ENCODE measurements at regions of chr12 and their contacts with region 1.

Region 1: DNA sequence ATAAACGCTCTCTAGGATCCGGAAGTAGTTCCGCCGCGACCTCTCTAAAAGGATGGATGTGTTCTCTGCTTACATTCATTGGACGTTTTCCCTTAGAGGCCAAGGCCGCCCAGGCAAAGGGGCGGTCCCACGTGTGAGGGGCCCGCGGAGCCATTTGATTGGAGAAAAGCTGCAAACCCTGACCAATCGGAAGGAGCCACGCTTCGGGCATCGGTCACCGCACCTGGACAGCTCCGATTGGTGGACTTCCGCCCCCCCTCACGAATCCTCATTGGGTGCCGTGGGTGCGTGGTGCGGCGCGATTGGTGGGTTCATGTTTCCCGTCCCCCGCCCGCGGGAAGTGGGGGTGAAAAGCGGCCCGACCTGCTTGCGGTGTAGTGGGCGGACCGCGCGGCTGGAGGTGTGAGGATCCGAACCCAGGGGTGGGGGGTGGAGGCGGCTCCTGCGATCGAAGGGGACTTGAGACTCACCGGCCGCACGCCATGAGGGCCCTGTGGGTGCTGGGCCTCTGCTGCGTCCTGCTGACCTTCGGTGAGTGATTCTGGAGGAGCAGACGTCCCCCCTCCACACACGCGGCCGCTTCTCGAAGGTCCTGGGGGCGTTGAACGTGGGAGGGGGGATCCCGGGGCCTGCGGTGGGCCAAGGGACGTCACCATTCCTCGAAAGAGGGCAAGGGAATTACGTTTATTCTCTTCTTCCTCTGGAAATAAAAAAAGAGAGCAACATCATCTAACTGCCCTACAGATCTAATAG is at the start of gene HSP90B1:
- DNase-seq: peak; percentile 100
- ATAC-seq: peak; percentile 63
- H3K4me3 Mint-ChIP-seq: peak within 1 kb of the TSS; percentile 87
- H3K27ac Mint-ChIP-seq: peak within 1 kb of the TSS; percentile 99
- H3K4me1 Mint-ChIP-seq: peaks cover 49% of the 10 kb centered on the region
- H3K27me3 Mint-ChIP-seq: peaks cover 3% of the 10 kb centered on the region
- CTCF ChIP-seq: no peak
- total RNA-seq, gene HSP90B1: 412 to 418 TPM

Region 2: GRCh38 chr12:103771466-103771865 is 158.7 kb before region 1 on chr12:
- CTCF ChIA-PET with region 1: no interaction called
- POLR2A ChIA-PET with region 1: no interaction called
- intact Hi-C with region 1: no loop called
- DNase-seq: peak; percentile 6
- ATAC-seq: no peak
- H3K4me3 Mint-ChIP-seq: no peak overlapping the region
- H3K27ac Mint-ChIP-seq: no peak overlapping the region
- H3K4me1 Mint-ChIP-seq: no peaks in the 10 kb centered on the region
- H3K27me3 Mint-ChIP-seq: no peaks in the 10 kb centered on the region
- CTCF ChIP-seq: no peak

Region 3: DNA sequence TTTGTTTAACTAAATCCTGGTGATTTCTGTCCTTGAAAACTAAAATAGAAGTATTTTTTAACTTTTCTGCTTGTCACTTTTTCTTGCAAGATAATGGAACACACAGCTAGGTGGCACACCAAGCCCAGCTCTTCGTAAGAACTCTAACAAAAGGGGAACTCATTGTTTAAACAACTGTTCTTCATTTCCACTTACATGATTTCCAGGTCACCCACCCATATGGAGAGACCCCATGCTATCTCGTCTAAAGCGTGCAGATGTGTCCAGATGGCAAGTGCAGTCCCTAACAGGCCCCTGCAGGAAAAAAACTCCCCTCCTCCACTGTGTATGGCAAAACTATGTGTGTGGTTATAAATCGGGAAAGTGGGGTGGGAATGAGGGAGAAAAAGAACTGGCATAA is 45.9 kb before region 1 on chr12:
- CTCF ChIA-PET with region 1: interaction called, 16 read pairs
- POLR2A ChIA-PET with region 1: interaction called, 18 read pairs
- intact Hi-C with region 1: loop called (anchors 5 kb)
- DNase-seq: peak; percentile 74
- ATAC-seq: peak; percentile 17
- H3K4me3 Mint-ChIP-seq: no peak overlapping the region
- H3K27ac Mint-ChIP-seq: no peak overlapping the region
- H3K4me1 Mint-ChIP-seq: peaks cover 42% of the 10 kb centered on the region
- H3K27me3 Mint-ChIP-seq: no peaks in the 10 kb centered on the region
- CTCF ChIP-seq: peak; percentile 72

Region 4: DNA sequence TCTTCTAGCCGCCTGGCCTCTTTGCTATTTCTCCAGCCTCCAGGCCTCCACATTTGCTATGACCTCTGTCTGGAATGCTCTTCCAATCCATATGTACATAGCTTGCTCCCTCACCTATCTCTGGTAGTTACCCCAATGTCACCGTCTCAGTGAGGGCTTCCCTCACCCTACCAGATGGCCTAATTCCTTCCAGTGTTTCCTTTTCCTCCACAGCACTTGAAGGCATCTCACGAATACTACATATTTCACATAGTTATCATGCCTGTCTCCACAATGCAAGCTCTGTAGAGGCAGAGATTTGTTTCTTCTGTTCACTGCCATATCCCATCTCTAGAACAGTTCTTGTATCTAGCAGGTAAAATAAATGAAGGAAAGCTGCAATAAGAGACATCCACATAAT is 21.3 kb before region 1 on chr12:
- CTCF ChIA-PET with region 1: interaction called, 14 read pairs
- POLR2A ChIA-PET with region 1: interaction called, 90 read pairs
- intact Hi-C with region 1: loop called (anchors 2 kb)
- DNase-seq: no peak
- ATAC-seq: no peak
- H3K4me3 Mint-ChIP-seq: no peak overlapping the region
- H3K27ac Mint-ChIP-seq: no peak overlapping the region
- H3K4me1 Mint-ChIP-seq: peaks cover 49% of the 10 kb centered on the region
- H3K27me3 Mint-ChIP-seq: no peaks in the 10 kb centered on the region
- CTCF ChIP-seq: no peak

Region 5: DNA sequence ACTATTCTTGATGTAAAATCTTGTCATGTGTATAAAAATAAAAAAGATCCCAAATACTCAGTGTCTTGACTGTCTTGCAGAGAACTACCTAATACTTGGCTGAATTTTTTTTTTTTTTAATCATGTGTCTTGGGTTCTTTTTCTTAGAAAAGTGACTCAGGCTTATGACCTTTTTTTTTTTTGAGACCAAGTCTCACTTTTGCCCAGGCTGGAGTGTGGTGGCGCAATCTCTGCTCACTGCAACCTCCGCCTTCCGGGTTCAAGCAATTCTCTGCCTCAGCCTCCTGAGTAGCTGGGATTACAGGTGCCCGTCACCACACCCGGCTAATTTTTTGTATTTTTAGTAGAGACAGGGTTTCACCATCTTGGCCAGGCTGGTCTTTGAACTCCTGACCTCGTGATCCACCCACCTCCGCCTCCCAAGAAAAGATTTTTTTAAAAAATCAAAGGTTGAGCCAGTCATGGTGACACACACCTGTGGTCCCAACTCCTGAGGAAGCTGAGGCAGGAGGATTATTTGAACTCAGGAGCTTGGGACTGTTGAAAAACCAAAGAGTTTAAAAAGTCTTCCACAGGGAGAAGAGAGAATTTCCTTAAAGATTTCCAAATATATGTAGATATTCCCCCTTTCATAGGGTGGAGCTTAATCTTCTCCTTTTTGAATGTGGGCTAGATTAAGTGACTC is 17.8 kb after region 1 on chr12:
- CTCF ChIA-PET with region 1: interaction called, 5 read pairs
- POLR2A ChIA-PET with region 1: interaction called, 56 read pairs
- intact Hi-C with region 1: no loop called
- DNase-seq: peak; percentile 48
- ATAC-seq: peak; percentile 37
- H3K4me3 Mint-ChIP-seq: no peak overlapping the region
- H3K27ac Mint-ChIP-seq: peak overlapping the region; percentile 71
- H3K4me1 Mint-ChIP-seq: peaks cover 60% of the 10 kb centered on the region
- H3K27me3 Mint-ChIP-seq: no peaks in the 10 kb centered on the region
- CTCF ChIP-seq: no peak

Region 6: DNA sequence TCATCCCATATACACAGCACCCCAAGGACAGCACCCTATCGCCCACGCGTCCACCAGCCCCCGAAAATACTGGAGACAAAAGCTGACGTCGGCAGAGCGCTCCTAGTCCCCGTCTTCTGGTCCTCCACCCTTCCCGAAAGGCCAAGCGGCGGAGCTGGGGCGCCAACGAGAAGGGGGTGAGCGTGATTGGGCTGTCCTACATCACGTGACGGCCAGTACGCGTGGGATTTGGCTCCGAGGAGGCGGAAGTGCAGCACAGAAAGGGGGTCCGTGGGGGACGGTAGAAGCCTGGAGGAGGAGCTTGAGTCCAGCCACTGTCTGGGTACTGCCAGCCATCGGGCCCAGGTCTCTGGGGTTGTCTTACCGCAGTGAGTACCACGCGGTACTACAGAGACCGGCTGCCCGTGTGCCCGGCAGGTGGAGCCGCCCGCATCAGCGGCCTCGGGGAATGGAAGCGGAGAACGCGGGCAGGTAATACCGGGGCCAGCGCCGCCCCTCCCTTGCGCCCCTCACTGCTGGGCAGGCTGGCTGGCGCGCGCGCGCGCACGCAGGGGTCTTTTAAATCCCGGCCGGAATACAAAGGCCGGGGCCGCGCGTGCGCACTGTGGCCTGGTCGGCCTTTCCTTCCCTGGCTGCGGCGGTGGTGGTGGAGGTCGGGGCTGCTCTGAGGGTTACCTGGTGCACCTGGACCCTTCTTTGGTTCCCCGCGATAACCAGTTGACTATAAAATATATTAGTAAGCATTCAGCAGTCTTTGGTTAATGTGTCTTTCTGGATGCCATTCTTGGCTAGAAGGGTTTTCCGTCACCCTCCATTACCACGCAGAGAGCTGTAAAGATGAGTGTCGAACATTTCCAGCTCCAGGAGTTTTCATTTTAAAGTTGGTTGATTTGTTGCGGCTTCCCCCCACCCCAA is 35.6 kb after region 1 on chr12 and contains the start of gene TDG:
- CTCF ChIA-PET with region 1: interaction called, 3 read pairs
- POLR2A ChIA-PET with region 1: interaction called, 76 read pairs
- intact Hi-C with region 1: loop called (anchors 5 kb)
- DNase-seq: peak; percentile 99
- ATAC-seq: peak; percentile 94
- H3K4me3 Mint-ChIP-seq: peak within 1 kb of the TSS; percentile 90
- H3K27ac Mint-ChIP-seq: peak within 1 kb of the TSS; percentile 98
- H3K4me1 Mint-ChIP-seq: peaks cover 40% of the 10 kb centered on the region
- H3K27me3 Mint-ChIP-seq: no peaks in the 10 kb centered on the region
- CTCF ChIP-seq: no peak
- total RNA-seq, gene TDG: 37.4 to 37.5 TPM

Region 7: DNA sequence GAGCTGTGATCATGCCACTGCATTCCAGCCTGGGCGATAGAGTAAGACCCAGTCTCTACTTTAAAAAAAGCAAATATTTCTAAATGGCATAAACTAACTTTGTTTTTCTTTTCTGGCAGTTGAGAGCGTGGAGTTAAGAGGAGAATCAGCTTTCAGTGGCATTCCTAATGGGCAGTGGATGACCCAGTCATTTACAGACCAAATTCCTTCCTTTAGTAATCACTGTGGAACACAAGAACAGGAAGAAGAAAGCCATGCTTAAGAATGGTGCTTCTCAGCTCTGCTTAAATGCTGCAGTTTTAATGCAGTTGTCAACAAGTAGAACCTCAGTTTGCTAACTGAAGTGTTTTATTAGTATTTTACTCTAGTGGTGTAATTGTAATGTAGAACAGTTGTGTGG is 56.6 kb after region 1 on chr12:
- CTCF ChIA-PET with region 1: no interaction called
- POLR2A ChIA-PET with region 1: no interaction called
- intact Hi-C with region 1: no loop called
- DNase-seq: no peak
- ATAC-seq: no peak
- H3K4me3 Mint-ChIP-seq: no peak overlapping the region
- H3K27ac Mint-ChIP-seq: no peak overlapping the region
- H3K4me1 Mint-ChIP-seq: no peaks in the 10 kb centered on the region
- H3K27me3 Mint-ChIP-seq: no peaks in the 10 kb centered on the region
- CTCF ChIP-seq: no peak

Region 8: DNA sequence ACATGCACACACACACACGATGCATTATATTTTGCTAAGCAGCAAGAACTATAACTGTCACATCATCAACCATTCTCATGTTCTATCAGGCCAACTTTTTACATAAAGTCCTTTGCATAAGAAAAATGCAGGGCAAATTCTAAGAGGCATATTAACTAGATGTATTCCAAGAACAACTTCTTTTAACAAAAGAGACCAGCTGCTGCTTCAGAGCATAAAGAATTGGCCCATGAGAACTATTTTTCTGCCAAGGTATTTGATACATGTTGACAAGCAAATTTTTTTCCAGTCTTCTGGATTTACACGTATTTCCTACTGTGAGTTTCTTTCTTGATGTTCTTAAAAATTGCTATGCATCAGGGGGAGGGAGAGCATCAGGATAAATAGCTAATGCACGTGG is 92.6 kb after region 1 on chr12:
- CTCF ChIA-PET with region 1: no interaction called
- POLR2A ChIA-PET with region 1: no interaction called
- intact Hi-C with region 1: no loop called
- DNase-seq: no peak
- ATAC-seq: no peak
- H3K4me3 Mint-ChIP-seq: no peak overlapping the region
- H3K27ac Mint-ChIP-seq: no peak overlapping the region
- H3K4me1 Mint-ChIP-seq: no peaks in the 10 kb centered on the region
- H3K27me3 Mint-ChIP-seq: peaks cover 10% of the 10 kb centered on the region
- CTCF ChIP-seq: no peak